ENCODE measurements at regions of chr10 and their contacts with region 1.

Region 1: GRCh38 chr10:62816331-62817120 is at the start of gene EGR2:
- DNase-seq: peak; percentile 98
- H3K4me3 ChIP-seq: peak within 1 kb of the TSS; percentile 69 to 98 (median 89)
- H3K27ac ChIP-seq: peak within 1 kb of the TSS; percentile 72 to 93 (median 90)
- H3K4me1 ChIP-seq: peaks cover 20 to 62% (median 44%) of the 10 kb centered on the region in 6 donors
- H3K27me3 ChIP-seq: peaks cover 0 to 68% (median 32%) of the 10 kb centered on the region in 7 donors
- CTCF ChIP-seq: peak in 1 of 11 experiments; percentile 28
- POLR2A ChIP-seq: no peak
- total RNA-seq, gene EGR2: 0.94 to 16.8 (median 3.3) TPM

Region 2: DNA sequence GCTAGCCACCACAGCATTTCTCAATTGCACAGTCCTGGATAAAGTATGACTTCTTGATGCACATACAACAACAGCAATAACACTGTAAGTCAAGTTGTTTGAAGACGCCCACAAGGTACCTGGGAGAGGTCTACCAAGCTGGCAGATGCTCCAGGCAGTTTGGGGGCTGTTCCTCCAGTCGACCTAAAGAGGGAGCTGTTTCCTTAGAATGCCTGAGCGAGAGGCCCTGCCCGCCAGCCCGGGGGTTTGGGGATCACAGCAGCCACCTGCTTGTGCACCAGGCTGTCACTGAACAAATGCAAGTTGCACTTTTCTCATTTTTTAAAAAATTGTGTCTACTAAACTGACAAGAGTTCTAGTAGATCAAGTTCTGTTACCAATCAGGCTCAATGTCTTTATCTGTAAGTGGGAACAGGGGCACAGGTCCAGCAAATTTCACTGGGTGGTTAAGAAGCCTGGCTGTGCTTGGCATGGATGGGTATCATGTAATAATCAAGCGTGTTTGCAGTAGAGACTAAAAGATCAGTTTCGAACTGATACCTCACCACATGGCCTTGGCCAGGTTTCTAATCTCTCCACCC is 205.8 kb before region 1 on chr10:
- intact Hi-C with region 1: loop called (anchors 10 kb)
- DNase-seq: peak; percentile 92
- H3K4me3 ChIP-seq: no peak overlapping the region
- H3K27ac ChIP-seq: no peak overlapping the region
- H3K4me1 ChIP-seq: peaks cover 0 to 12% (median 5%) of the 10 kb centered on the region in 6 donors
- H3K27me3 ChIP-seq: peaks cover 0 to 7% (median 0%) of the 10 kb centered on the region in 7 donors
- CTCF ChIP-seq: peak; percentile 66 to 92 (median 84)
- POLR2A ChIP-seq: no peak

Region 3: GRCh38 chr10:63241841-63242281 is 425.3 kb after region 1 on chr10:
- intact Hi-C with region 1: no loop called
- DNase-seq: no peak
- H3K4me3 ChIP-seq: peak overlapping the region in 2 of 8 donors; percentile 25 to 41
- H3K27ac ChIP-seq: peak overlapping the region; percentile 23 to 88 (median 70)
- H3K4me1 ChIP-seq: peaks cover 42 to 97% (median 76%) of the 10 kb centered on the region in 6 donors
- H3K27me3 ChIP-seq: no peaks in the 10 kb centered on the region
- CTCF ChIP-seq: no peak
- POLR2A ChIP-seq: no peak